HepG2 (cell line): ENCODE measurements at regions of chr20 and their contacts with region 1.

Region 1: GRCh38 chr20:21019814-21020658 is 86.1 kb downstream of the LINC00237 start:
- DNase-seq: peak; percentile 82
- ATAC-seq: peak; percentile 63
- H3K4me3 ChIP-seq: peak overlapping the region; percentile 13 to 51 (median 31); a peak in 5 of 6 replicates
- H3K27ac ChIP-seq: peak overlapping the region; percentile 50
- H3K4me1 ChIP-seq: peaks cover 72% of the 10 kb centered on the region
- H3K27me3 ChIP-seq: no peaks in the 10 kb centered on the region
- CTCF ChIP-seq: no peak
- EP300 ChIP-seq: peak in 1 of 2 experiments; percentile 78; a peak in 2 of 4 replicates
- POLR2A ChIP-seq: no peak
- RAD21 ChIP-seq: no peak

Region 2: DNA sequence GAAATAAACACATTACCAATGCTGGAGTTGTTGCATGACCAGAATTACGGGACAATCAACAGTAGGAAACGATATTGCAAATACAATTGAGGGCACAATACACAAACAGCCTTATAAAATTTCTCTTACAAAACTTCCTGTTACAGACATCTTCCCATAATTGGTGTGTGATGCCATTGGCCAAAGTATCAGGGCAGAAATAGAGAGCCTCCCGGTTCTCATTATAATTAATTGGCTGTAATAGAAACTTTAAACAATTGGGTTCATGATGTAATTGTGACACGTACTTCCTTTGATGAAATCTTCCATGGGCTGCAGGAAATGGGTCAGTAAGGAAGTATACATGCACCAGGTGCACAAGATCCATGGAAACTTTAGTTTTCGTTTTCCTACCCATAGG is 267.3 kb before region 1 on chr20:
- CTCF ChIA-PET with region 1: no interaction called
- POLR2A ChIA-PET with region 1: no interaction called
- in situ Hi-C with region 1: no loop called
- intact Hi-C with region 1: no loop called
- DNase-seq: no peak
- ATAC-seq: no peak
- H3K4me3 ChIP-seq: no peak overlapping the region
- H3K27ac ChIP-seq: no peak overlapping the region
- H3K4me1 ChIP-seq: peaks cover 14% of the 10 kb centered on the region
- H3K27me3 ChIP-seq: peaks cover 0 to 7% of the 10 kb centered on the region in 2 experiments; a peak in 1 of 5 replicates
- CTCF ChIP-seq: no peak
- EP300 ChIP-seq: no peak
- POLR2A ChIP-seq: no peak
- RAD21 ChIP-seq: no peak

Region 3: DNA sequence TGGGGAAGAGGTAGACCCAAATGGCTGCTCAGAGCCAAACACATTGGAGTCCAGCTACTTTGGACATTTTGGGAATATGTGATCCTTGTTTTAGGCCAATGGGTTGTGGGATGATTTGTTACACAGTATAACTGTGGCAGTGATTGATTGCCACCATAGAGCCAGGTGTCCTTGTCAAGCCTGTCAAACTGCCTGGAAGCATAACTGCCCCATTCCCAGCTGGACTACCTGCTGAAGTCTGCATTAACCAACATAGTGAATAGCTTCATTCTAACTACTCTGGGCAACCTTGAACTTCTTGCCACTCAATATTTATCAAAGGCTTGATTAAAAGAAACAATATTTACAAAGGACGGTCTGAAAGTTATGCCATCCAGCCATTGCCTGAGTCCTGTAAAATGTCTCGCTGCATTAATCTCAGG is 78.6 kb before region 1 on chr20:
- CTCF ChIA-PET with region 1: no interaction called
- POLR2A ChIA-PET with region 1: no interaction called
- in situ Hi-C with region 1: no loop called
- intact Hi-C with region 1: loop called (anchors 2 kb)
- DNase-seq: peak; percentile 93
- ATAC-seq: peak; percentile 93
- H3K4me3 ChIP-seq: no peak overlapping the region
- H3K27ac ChIP-seq: no peak overlapping the region
- H3K4me1 ChIP-seq: peaks cover 23% of the 10 kb centered on the region
- H3K27me3 ChIP-seq: peaks cover 0 to 22% of the 10 kb centered on the region in 2 experiments; a peak in 3 of 5 replicates
- CTCF ChIP-seq: no peak
- EP300 ChIP-seq: peak in 1 of 2 experiments; percentile 81; a peak in 3 of 4 replicates
- POLR2A ChIP-seq: no peak
- RAD21 ChIP-seq: no peak

Region 4: GRCh38 chr20:20969701-20970280 is 50.2 kb before region 1 on chr20:
- CTCF ChIA-PET with region 1: no interaction called
- POLR2A ChIA-PET with region 1: no interaction called
- in situ Hi-C with region 1: no loop called
- intact Hi-C with region 1: loop called (anchors 5 kb)
- DNase-seq: no peak
- ATAC-seq: no peak
- H3K4me3 ChIP-seq: no peak overlapping the region
- H3K27ac ChIP-seq: no peak overlapping the region
- H3K4me1 ChIP-seq: peaks cover 22% of the 10 kb centered on the region
- H3K27me3 ChIP-seq: peaks cover 7 to 41% of the 10 kb centered on the region in 2 experiments; a peak in 4 of 5 replicates
- CTCF ChIP-seq: no peak
- EP300 ChIP-seq: no peak
- POLR2A ChIP-seq: no peak
- RAD21 ChIP-seq: no peak